Heart right ventricle (tissue), 16 donors: ENCODE measurements at regions of chr15 and their contacts with region 1.

Region 1: DNA sequence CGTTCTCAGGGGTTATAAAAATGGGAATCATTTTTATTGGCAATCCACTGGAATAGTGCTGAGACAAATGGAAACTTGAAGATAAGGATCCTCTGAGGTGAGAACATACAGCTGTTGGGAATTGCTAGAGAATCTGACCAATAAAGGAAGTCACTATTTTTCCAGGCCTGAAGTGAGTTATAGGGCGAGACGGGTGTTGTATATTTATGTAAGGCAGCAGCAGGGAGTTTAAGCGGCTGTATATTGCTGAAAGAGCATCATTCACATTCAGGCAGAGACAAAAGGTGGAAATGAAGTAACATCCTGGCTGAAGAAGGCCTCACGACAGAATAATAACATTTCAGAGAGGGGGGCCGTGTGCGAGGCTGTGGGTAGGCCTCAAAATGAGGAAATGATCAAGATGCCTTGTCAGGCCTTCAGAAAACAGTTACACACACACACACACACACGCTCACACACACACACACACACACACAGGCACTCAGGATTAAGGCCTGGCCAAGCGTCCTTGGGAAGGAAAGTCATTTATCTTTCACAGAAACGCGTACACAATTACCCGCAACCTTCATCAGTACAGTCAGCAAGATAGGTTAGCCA is 964.9 kb upstream of the NR2F2 start:
- DNase-seq: peak; percentile 10 to 65
- ATAC-seq: peak; percentile 81 to 98 (median 94)
- H3K4me3 ChIP-seq: no peak overlapping the region
- H3K27ac ChIP-seq: peak overlapping the region in 8 of 10 donors; percentile 16 to 67 (median 45)
- H3K4me1 ChIP-seq: peaks cover 0 to 28% (median 4%) of the 10 kb centered on the region in 9 donors
- H3K27me3 ChIP-seq: no peaks in the 10 kb centered on the region
- CTCF ChIP-seq: no peak

Region 2: DNA sequence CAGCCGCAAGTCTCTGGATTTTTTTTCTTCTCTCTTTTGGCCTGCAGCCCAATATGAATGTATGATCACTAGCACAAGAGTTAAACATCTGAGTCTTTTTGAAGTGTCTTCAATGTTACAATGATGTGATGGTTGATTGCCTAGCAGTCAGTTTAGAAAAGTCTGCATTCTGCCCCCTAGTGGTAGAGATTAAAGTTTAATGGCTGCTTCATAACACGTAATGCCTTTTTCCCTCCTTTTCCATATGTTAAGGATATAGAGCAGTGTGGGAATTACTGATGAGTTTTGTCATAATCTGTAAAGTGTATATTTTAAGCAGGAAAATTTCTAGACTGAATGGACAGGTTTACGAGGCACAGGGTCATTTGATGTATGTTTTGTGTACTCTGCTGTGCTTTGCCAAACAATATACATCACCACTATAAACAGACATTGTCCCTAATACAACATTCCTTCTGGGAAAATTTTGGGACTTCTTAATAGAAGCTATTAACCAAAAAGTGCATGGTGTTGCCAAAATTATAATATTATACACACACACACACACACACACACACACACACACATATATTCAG is 73.6 kb before region 1 on chr15:
- intact Hi-C with region 1: no loop called
- DNase-seq: no peak
- ATAC-seq: no peak
- H3K4me3 ChIP-seq: no peak overlapping the region
- H3K27ac ChIP-seq: no peak overlapping the region
- H3K4me1 ChIP-seq: peaks cover 0 to 32% (median 6%) of the 10 kb centered on the region in 9 donors
- H3K27me3 ChIP-seq: peaks cover 0 to 5% (median 2%) of the 10 kb centered on the region in 7 donors
- CTCF ChIP-seq: peak; percentile 37 to 72 (median 63)

Region 3: DNA sequence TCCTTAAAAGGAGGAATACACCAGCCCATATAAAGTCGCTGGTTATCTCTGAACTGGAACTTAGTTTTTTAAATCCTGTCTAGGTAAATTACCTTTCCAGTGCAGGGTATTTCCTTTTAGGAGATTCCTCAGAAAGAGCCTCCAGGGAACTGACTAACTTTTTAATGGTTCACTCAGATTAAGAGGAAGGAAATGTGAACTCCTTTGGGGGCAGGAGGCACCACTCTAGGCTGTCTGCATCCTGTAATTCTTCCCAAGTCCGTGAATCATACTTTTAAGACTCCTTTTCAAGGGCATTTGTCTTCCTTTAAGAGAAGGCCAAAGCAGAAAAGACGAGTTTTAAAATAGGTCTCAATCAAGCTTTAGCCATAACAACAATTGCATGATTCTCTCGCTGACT is 93.7 kb after region 1 on chr15:
- intact Hi-C with region 1: loop called in 1 of 10 experiments (anchors 5 kb)
- DNase-seq: no peak
- ATAC-seq: peak in 7 of 8 donors; percentile 49 to 85 (median 77)
- H3K4me3 ChIP-seq: no peak overlapping the region
- H3K27ac ChIP-seq: peak overlapping the region in 9 of 10 donors; percentile 0 to 77 (median 56)
- H3K4me1 ChIP-seq: peaks cover 0 to 34% (median 18%) of the 10 kb centered on the region in 9 donors
- H3K27me3 ChIP-seq: no peaks in the 10 kb centered on the region
- CTCF ChIP-seq: no peak